Sigmoid colon (tissue), 7 donors: ENCODE measurements at regions of chr11 and their contacts with region 1.

Region 1: GRCh38 chr11:2305140-2305840 is 3.5 kb downstream of the TSPAN32 start:
- DNase-seq: peak; percentile 95
- H3K4me3 ChIP-seq: peak overlapping the region in 1 of 4 donors; percentile 23
- H3K27ac ChIP-seq: peak overlapping the region; percentile 87 to 94 (median 92)
- H3K4me1 ChIP-seq: peaks cover 0 to 62% (median 52%) of the 10 kb centered on the region in 4 donors
- H3K27me3 ChIP-seq: no peaks in the 10 kb centered on the region
- CTCF ChIP-seq: peak; percentile 91 to 98 (median 94)
- EP300 ChIP-seq: no peak
- POLR2A ChIP-seq: no peak

Region 2: DNA sequence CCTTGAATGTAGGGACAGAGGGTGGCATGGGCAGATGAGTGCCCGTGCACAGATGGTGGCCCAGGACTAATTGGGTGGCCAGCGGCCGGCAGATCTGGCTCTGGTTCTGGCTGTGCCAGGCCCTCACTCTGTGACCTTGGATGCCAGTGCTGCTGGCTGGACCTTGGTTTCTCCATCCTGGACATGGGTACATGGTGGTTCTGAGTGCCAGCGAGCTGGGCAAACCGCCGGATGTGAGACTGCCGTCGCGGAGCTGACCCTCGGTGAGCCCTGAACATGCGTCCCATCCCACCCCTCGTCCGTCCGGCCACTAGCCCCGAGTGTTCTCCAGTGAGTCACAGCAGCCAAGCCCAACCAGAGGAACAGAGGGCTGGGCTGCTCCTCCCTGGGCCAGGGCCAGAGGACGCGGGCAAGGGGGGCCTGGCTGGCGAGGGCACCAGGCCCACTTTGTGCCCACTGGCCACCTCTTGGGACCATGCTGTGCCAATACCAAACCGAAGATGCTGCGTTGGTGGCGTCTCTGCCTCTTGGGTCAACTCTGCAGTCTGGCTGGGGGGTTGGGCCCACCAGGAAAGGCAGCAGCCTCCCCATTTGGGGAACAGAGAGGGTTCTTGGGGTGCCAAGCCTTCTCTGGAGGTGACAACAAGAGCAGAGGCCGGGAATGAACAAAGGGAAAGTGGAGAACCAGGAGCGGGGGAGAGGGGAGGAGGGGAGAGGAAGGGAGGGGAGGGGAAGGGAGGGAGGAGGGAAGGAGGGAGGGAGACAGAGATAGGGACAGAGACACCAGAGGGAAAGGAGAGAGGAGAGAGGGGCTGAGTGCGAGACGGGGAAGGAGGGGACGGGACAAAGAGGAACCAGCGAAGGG is 441.7 kb before region 1 on chr11:
- intact Hi-C with region 1: loop called (anchors 10 kb)
- DNase-seq: peak; percentile 94
- H3K4me3 ChIP-seq: peak overlapping the region in 3 of 4 donors; percentile 29 to 41 (median 40)
- H3K27ac ChIP-seq: peak overlapping the region; percentile 84 to 91 (median 88)
- H3K4me1 ChIP-seq: peaks cover 0 to 45% (median 42%) of the 10 kb centered on the region in 4 donors
- H3K27me3 ChIP-seq: no peaks in the 10 kb centered on the region
- CTCF ChIP-seq: no peak
- EP300 ChIP-seq: no peak
- POLR2A ChIP-seq: no peak

Region 3: GRCh38 chr11:2196970-2197770 is 108.1 kb before region 1 on chr11:
- intact Hi-C with region 1: loop called (anchors 2 kb)
- DNase-seq: peak; percentile 86
- H3K4me3 ChIP-seq: no peak overlapping the region
- H3K27ac ChIP-seq: no peak overlapping the region
- H3K4me1 ChIP-seq: no peaks in the 10 kb centered on the region
- H3K27me3 ChIP-seq: peaks cover 0 to 25% (median 0%) of the 10 kb centered on the region in 3 donors
- CTCF ChIP-seq: peak; percentile 88 to 94 (median 89)
- EP300 ChIP-seq: no peak
- POLR2A ChIP-seq: no peak

Region 4: GRCh38 chr11:2377511-2378443 is 72.5 kb after region 1 on chr11:
- intact Hi-C with region 1: loop called (anchors 2 kb)
- DNase-seq: peak; percentile 88
- H3K4me3 ChIP-seq: peak overlapping the region; percentile 86 to 100 (median 99)
- H3K27ac ChIP-seq: peak overlapping the region; percentile 99 to 100 (median 100)
- H3K4me1 ChIP-seq: peaks cover 0 to 65% (median 53%) of the 10 kb centered on the region in 4 donors
- H3K27me3 ChIP-seq: no peaks in the 10 kb centered on the region
- CTCF ChIP-seq: no peak
- EP300 ChIP-seq: no peak
- POLR2A ChIP-seq: no peak

Region 5: DNA sequence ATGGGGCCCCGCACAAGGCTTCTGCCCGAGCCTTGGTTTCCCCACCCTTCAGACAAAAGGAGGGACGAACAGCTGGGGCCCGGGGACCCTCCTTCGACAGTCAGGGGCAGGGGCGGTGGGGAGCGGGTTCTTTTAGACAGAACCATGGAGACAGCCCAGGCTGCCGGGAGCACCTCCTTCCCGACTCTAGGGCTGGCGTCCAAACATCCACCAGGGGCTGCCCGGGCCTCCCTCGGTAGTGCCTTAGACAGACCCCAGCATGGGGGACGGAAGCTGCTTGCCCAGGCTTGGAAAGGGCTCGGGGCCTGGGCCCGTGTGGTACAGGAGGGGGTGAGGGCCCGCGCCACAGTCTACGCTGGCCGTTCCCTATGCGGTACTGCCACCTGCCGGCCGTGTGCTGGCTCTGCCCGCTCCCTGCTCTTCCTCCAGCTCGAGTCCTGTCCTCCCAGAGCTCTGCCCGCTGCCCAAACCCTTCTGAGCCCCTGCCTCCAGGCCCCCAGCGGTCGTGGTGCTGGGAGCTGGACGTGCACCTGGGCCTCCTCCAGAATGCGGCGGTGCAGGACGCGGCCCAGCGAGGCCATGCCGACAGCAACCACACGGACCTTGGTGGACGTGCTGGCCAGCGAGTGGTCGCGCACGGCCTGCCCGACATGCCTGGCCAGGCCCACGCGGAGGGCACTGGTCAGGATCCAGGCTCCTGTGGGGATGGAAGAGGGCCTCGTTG is 115.4 kb after region 1 on chr11:
- intact Hi-C with region 1: loop called (anchors 1 kb)
- DNase-seq: peak; percentile 87
- H3K4me3 ChIP-seq: no peak overlapping the region
- H3K27ac ChIP-seq: peak overlapping the region in 2 of 4 donors; percentile 47 to 63
- H3K4me1 ChIP-seq: peaks cover 0 to 19% (median 12%) of the 10 kb centered on the region in 4 donors
- H3K27me3 ChIP-seq: peaks cover 0 to 5% (median 0%) of the 10 kb centered on the region in 3 donors
- CTCF ChIP-seq: peak; percentile 94 to 96 (median 96)
- EP300 ChIP-seq: no peak
- POLR2A ChIP-seq: no peak